Psoas muscle (tissue), 8 donors: ENCODE measurements at regions of chr3 and their contacts with region 1.

Region 1: DNA sequence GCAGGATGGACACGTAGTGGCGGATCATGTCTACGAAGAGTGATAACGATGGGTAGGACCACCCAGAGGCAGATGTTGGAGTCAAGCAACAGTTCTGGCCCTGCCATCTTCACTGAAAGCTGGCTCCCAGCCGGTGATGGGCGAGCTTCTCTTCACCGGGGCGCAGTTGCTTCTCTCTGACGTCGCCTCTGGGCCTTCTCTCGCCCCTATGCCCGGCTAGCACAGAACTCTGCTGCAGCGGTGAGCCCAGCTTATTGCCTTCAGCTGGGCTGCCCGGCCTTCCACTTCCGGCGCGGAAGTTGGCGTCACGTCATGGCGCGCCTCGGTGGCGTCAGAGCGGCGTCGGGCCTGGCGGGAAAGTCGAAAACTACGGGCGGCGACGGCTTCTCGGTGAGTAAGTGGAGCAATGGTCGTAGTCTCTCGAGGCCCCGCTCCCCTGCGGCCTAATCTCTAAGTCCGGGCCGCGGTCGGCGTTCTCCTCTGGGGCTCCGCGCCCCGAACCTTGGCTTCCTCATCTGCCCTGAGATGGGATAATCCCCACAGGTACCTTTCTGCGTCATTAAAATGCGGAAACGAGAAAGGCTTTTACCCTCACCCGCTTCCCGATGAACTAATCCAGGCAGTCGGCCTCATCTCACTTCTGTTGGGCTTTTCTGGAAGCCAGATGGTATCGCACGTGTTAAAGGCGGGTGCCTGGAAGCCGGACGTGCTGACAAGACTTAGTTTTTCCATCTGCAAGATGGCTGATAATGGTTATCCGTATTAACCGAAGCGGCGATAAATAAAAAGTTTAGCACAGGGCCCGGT is at the start of gene FANCD2:
- DNase-seq: peak; percentile 89 to 95
- ATAC-seq: peak; percentile 95 to 99 (median 96)
- H3K4me3 ChIP-seq: peak within 1 kb of the TSS; percentile 78
- H3K27ac ChIP-seq: peak within 1 kb of the TSS; percentile 72
- H3K4me1 ChIP-seq: peaks cover 21% of the 10 kb centered on the region
- H3K27me3 ChIP-seq: no peaks in the 10 kb centered on the region
- CTCF ChIP-seq: no peak
- total RNA-seq, gene FANCD2: 0.39 to 1.0 (median 0.75) TPM

Region 2: GRCh38 chr3:9946112-9947024 is 79.9 kb before region 1 on chr3:
- intact Hi-C with region 1: loop called in 1 of 2 experiments (anchors 5 kb)
- DNase-seq: peak; percentile 90 to 93
- ATAC-seq: peak; percentile 70 to 80 (median 78)
- H3K4me3 ChIP-seq: peak overlapping the region; percentile 81
- H3K27ac ChIP-seq: peak overlapping the region; percentile 81
- H3K4me1 ChIP-seq: no peaks in the 10 kb centered on the region
- H3K27me3 ChIP-seq: no peaks in the 10 kb centered on the region
- CTCF ChIP-seq: peak; percentile 61

Region 3: DNA sequence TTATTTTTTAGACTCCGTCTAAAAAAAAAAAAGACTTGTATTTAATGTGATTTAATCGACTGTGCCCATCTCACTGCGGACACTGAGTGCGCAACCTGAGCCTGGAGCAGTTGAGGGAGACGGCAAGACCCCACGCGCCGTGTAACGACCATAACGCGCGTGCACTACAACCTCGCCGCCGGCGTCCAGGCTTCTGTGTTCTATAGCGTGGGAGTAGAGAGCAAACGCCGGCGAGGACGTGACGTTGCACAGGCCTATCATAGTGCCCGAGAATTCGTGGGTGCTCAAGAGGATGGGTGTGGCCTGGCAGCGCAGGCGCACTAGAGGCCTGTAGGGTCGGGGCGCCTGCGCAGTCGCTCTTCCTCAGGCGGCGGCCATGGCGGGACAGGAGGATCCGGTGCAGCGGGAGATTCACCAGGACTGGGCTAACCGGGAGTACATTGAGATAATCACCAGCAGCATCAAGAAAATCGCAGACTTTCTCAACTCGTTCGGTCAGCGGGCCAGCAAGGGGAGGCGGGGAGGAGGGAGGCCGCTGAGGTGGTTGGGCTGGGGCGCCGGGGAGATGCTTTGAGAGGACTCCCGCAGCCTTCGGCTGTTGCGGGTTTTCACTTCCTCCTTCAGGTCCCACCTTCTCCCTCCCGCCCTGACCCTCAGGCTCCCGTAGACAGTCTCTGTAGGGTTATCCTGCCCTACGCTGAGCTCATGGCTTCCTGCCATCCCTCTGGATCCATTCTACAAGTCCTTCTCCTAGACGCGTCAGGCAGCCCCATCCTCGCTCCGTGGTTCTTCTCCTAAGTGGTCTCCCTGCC is 89.2 kb after region 1 on chr3 and contains the start of gene BRK1:
- intact Hi-C with region 1: loop called (anchors 5 kb)
- DNase-seq: peak; percentile 95 to 97
- ATAC-seq: peak; percentile 100
- H3K4me3 ChIP-seq: peak within 1 kb of the TSS; percentile 71
- H3K27ac ChIP-seq: peak within 1 kb of the TSS; percentile 84
- H3K4me1 ChIP-seq: peaks cover 9% of the 10 kb centered on the region
- H3K27me3 ChIP-seq: no peaks in the 10 kb centered on the region
- CTCF ChIP-seq: no peak
- total RNA-seq, gene BRK1: 73.8 to 82.7 (median 78.9) TPM

Region 4: DNA sequence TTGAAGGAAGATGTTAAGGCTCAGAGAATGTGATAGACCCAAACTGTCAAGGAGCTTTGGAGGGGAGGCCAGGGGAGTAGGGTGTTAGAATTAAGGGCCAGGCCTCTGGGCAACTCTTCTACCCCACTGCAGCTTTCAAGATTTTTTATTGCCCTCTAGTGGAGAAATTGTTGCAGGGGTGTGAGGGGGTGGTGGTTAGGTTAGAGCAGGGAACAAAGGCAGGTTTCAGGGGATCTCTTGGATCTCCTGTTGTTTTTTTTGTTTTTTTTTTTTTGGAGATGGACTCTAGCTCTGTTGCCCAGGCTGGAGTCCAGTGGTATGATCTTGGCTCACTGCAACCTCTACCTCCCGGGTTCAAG is 296.0 kb after region 1 on chr3:
- intact Hi-C with region 1: loop called in 1 of 2 experiments (anchors 10 kb)
- DNase-seq: no peak
- ATAC-seq: no peak
- H3K4me3 ChIP-seq: no peak overlapping the region
- H3K27ac ChIP-seq: no peak overlapping the region
- H3K4me1 ChIP-seq: peaks cover 19% of the 10 kb centered on the region
- H3K27me3 ChIP-seq: no peaks in the 10 kb centered on the region
- CTCF ChIP-seq: peak; percentile 13